ENCODE measurements at regions of chr13 and their contacts with region 1.

Region 1: DNA sequence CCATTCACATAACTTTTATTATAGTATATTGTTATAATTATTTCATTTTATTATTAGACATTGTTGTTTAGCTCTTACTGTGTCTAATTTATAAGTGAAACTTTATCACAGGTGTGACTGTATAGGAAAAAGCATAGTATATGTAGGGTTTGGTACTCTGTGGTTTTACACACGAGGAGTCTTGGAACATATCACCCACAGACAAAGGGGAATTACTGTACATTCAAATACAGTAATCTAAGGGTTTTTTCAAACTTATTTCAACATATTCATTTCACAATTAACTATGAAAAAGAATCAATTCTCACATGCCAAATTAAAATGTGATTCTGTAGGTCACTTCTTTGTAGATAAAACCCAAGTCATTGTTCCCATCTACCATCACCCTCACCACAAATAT is 46.0 kb downstream of the RBM26 start:
- DNase-seq: no peak
- H3K4me3 Mint-ChIP-seq: no peak overlapping the region
- H3K27ac Mint-ChIP-seq: peak overlapping the region; percentile 69
- H3K4me1 Mint-ChIP-seq: peaks cover 19% of the 10 kb centered on the region
- H3K27me3 Mint-ChIP-seq: no peaks in the 10 kb centered on the region

Region 2: DNA sequence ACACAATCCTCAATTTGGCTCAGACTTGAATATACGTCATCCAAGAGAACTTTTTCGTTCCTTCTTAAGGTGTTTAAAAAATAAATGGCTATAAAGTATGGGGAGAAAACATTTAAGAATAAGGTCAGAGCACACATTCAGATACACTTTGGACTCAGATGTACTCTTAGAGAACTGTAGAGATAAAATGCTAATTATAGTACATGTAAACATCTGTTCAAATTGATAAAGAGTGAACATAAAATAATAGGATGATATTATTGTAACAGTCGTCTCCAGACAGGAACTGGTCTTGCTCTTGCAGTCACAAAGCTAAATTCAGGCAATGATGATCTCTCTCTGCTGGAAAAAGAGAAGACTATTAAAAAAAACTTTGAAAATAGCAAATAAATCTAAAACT is 45.4 kb before region 1 on chr13:
- intact Hi-C with region 1: no loop called
- DNase-seq: no peak
- H3K4me3 Mint-ChIP-seq: no peak overlapping the region
- H3K27ac Mint-ChIP-seq: no peak overlapping the region
- H3K4me1 Mint-ChIP-seq: no peaks in the 10 kb centered on the region
- H3K27me3 Mint-ChIP-seq: no peaks in the 10 kb centered on the region

Region 3: DNA sequence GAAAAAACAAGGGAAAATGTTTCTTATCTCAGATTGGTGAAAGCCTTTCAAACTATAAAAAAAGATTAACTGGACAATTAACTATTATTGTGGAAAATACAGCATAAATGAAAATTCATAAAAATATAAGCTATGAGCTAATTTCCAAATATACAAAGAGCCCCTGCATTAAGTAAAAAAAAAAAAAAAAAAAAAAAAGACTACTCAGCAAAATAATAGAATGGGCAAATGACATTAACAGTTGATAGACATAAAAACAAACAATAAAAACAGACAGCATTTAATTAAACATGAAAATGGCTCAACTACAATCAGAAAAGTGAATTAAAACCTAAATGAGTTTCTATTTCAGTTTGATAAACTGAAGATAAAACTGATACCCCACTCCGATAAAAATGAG is 31.6 kb before region 1 on chr13:
- intact Hi-C with region 1: loop called (anchors 5 kb)
- DNase-seq: no peak
- H3K4me3 Mint-ChIP-seq: no peak overlapping the region
- H3K27ac Mint-ChIP-seq: no peak overlapping the region
- H3K4me1 Mint-ChIP-seq: peaks cover 2% of the 10 kb centered on the region
- H3K27me3 Mint-ChIP-seq: no peaks in the 10 kb centered on the region

Region 4: DNA sequence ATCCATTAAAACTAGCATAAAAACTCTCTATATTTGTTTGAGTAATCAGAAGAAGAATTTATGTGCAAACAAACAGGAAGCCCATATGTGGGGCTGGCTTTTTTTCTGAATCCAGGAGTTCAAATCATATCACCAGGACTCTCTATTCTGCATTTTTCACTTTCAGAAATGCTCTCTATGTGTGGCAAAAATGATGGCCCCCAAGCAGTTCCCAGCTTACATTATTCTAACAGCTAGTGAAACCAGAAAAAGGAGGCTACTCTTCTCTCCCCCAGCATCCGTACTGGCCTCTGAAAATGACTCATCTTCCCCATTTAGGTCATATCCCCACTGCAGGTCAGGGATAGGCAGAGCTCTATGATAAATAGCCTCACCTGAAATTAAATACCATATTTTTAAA is 25.6 kb after region 1 on chr13:
- intact Hi-C with region 1: loop called (anchors 2 kb)
- DNase-seq: peak; percentile 68
- H3K4me3 Mint-ChIP-seq: no peak overlapping the region
- H3K27ac Mint-ChIP-seq: peak overlapping the region; percentile 56
- H3K4me1 Mint-ChIP-seq: peaks cover 47% of the 10 kb centered on the region
- H3K27me3 Mint-ChIP-seq: no peaks in the 10 kb centered on the region

Region 5: GRCh38 chr13:79593641-79594275 is 233.7 kb after region 1 on chr13:
- intact Hi-C with region 1: no loop called
- DNase-seq: no peak
- H3K4me3 Mint-ChIP-seq: no peak overlapping the region
- H3K27ac Mint-ChIP-seq: no peak overlapping the region
- H3K4me1 Mint-ChIP-seq: no peaks in the 10 kb centered on the region
- H3K27me3 Mint-ChIP-seq: no peaks in the 10 kb centered on the region